Activated CD4-positive, alpha-beta memory T cell treated with anti-CD3 and anti-CD28 coated beads, Interleukin-2, amount 10 ng/mL, durations not matched to agents 7 days and 5 days (primary cell): ENCODE measurements at regions of chr1 and their contacts with region 1.

Region 1: GRCh38 chr1:1777950-1778662 is at the start of gene NADK:
- DNase-seq: peak; percentile 76
- H3K4me3 Mint-ChIP-seq: peak within 1 kb of the TSS; percentile 77
- H3K27ac Mint-ChIP-seq: peak within 1 kb of the TSS; percentile 99
- H3K4me1 Mint-ChIP-seq: peaks cover 67% of the 10 kb centered on the region
- H3K27me3 Mint-ChIP-seq: no peaks in the 10 kb centered on the region
- total RNA-seq, gene NADK: 78.0 to 81.5 TPM

Region 2: GRCh38 chr1:1721201-1721600 is 56.9 kb before region 1 on chr1:
- CTCF ChIA-PET with region 1: no interaction called
- POLR2A ChIA-PET with region 1: interaction called, 10 read pairs
- DNase-seq: no peak
- H3K4me3 Mint-ChIP-seq: no peak overlapping the region
- H3K27ac Mint-ChIP-seq: no peak overlapping the region
- H3K4me1 Mint-ChIP-seq: peaks cover 14% of the 10 kb centered on the region
- H3K27me3 Mint-ChIP-seq: no peaks in the 10 kb centered on the region

Region 3: GRCh38 chr1:1906185-1907097 is 128.3 kb after region 1 on chr1:
- CTCF ChIA-PET with region 1: interaction called, 35 read pairs
- POLR2A ChIA-PET with region 1: interaction called, 22 read pairs
- DNase-seq: peak; percentile 72
- H3K4me3 Mint-ChIP-seq: peak overlapping the region; percentile 17
- H3K27ac Mint-ChIP-seq: peak overlapping the region; percentile 31
- H3K4me1 Mint-ChIP-seq: peaks cover 18% of the 10 kb centered on the region
- H3K27me3 Mint-ChIP-seq: no peaks in the 10 kb centered on the region